Right ventricle myocardium superior (tissue), 1 donor: ENCODE measurements at regions of chr4 and their contacts with region 1.

Region 1: GRCh38 chr4:38675146-38676121 is 11.4 kb downstream of the KLF3 start:
- DNase-seq: peak; percentile 62
- ATAC-seq: peak; percentile 68

Region 2: GRCh38 chr4:38319456-38320342 is 355.7 kb before region 1 on chr4:
- intact Hi-C with region 1: loop called (anchors 5 kb)
- DNase-seq: peak; percentile 97
- ATAC-seq: peak; percentile 88

Region 3: DNA sequence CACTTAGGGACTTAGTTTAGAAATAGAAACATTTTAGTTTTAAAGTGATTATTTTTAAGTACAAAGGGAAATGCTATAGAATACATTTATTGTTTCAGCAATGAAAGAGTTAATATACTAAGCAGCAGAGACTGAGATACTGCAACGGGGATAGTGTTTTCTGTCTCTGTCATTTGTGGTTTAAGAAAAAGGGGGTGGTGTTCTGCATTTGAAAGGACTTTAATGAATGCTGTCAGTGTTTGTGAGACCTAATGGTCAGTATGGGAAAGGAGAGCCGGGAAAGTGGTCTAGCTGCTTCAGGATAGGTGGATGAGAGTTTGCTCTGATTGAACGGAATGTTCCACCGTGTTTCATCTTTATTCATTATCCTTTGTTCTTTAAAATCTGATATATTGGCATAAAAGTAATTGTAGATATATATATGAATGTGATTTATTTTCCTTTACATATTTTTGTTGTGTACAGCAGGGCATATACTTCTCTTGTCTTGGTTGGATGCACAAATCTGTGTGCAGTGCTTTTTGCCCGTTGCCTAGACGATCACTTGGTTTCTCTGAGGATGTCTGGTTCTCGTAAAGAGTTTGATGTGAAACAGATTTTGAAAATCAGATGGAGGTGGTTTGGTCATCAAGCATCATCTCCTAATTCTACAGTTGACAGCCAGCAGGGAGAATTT is 386.8 kb after region 1 on chr4 and contains the start of gene KLHL5:
- intact Hi-C with region 1: no loop called
- DNase-seq: no peak
- ATAC-seq: no peak
- total RNA-seq, gene KLHL5: 13.2 TPM